ENCODE measurements at regions of chr2 and their contacts with region 1.

Region 1: DNA sequence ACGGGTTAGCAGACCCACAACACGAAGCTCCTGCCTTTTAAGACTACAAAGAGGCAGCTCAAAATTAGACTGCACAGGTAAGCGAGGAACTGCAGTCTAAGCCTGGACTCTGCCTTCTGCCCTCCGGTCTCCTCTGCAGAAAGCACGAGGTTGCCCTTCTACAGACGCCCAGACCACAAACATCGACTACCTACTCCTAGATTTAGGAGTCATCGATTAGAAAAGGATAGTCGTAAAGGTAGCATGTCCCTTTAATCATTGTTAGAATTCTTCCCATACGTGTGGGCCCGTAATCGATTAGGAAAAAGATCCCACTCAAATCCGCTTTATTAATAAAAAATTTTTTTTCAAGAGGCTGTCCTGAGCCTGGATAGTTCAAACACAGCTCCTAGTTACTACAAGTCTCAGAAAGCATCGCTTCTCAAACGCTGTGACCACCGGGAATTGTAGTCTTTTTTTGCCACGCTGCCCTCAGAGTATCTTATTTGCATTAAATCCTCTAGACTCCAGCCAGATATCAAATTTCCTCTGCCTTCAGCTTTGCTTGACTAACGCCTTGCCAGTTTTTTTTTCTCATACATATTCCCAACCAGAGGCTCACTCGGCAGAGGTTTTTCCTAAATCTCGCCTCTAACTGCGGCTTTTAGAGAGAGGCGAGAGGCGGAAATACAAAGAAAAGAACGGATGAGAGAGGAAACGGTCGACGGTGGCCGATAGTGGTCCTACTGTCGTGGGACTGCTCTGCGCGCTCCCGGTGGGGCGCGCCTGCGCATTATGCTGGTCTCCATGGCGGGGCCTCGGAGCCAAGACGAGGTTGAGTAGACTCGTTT is at the starts of genes CARF and WDR12:
- DNase-seq: peak; percentile 94
- H3K4me3 ChIP-seq: peak within 1 kb of the TSS; percentile 88
- H3K27ac ChIP-seq: peak within 1 kb of the TSS; percentile 82
- H3K4me1 ChIP-seq: peaks cover 20% of the 10 kb centered on the region
- CTCF ChIP-seq: no peak
- total RNA-seq, gene CARF: 12.5 and 14.7 TPM in 2 replicates
- total RNA-seq, gene WDR12: 38.4 and 54.1 TPM in 2 replicates

Region 2: GRCh38 chr2:203014456-203015199 is 102.9 kb after region 1 on chr2 and contains the start of gene NBEAL1:
- CTCF ChIA-PET with region 1: no interaction called
- POLR2A ChIA-PET with region 1: interaction called, 3 read pairs
- intact Hi-C with region 1: loop called (anchors 1 kb)
- DNase-seq: peak; percentile 96
- H3K4me3 ChIP-seq: peak within 1 kb of the TSS; percentile 76
- H3K27ac ChIP-seq: no peak within 1 kb of the TSS
- H3K4me1 ChIP-seq: peaks cover 19% of the 10 kb centered on the region
- CTCF ChIP-seq: no peak
- total RNA-seq, gene NBEAL1: 5.3 and 5.9 TPM in 2 replicates

Region 3: GRCh38 chr2:203437511-203437910 is 525.8 kb after region 1 on chr2:
- CTCF ChIA-PET with region 1: no interaction called
- POLR2A ChIA-PET with region 1: no interaction called
- intact Hi-C with region 1: loop called (anchors 10 kb)
- DNase-seq: no peak
- H3K4me3 ChIP-seq: no peak overlapping the region
- H3K27ac ChIP-seq: no peak overlapping the region
- H3K4me1 ChIP-seq: peaks cover 17% of the 10 kb centered on the region
- CTCF ChIP-seq: no peak